Posterior vena cava (tissue), 2 donors: ENCODE measurements at regions of chr16 and their contacts with region 1.

Region 1: DNA sequence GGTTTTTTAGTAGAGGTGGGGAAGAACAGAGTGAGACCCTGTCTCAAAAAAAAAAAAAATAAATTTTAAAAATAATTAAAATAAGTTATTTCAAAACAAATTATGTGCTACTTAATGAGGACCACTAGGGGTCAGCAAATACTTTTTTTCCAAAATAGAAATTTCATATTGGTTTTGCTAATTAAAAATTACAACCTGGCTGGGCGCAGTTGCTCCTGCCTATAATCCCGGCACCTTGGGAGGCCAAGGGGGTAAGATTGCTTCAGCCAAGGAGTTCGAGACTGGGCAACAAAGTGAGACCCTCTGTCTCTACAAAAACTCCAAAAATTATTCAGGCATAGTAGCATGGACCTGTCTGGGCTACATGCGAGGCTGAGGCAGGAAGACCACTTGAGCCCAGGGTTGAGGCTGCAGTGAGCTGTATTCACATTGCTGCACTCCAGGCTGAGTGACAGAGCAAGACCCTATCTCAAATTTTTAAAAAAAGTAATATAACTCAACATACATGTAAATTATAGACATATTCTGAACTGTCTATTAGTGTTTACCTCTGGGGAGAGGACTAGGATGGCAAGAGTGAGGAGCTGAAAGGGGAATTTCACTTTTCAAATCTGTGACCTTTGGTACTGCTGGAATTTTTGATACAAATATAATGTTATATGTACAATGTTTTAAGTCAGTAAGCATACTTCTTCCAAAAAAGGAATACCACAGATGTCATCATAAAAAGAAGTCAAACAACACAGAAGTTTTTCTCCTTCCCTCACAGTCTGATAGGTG is 8.1 kb downstream of the MEIOB start:
- DNase-seq: no peak

Region 2: DNA sequence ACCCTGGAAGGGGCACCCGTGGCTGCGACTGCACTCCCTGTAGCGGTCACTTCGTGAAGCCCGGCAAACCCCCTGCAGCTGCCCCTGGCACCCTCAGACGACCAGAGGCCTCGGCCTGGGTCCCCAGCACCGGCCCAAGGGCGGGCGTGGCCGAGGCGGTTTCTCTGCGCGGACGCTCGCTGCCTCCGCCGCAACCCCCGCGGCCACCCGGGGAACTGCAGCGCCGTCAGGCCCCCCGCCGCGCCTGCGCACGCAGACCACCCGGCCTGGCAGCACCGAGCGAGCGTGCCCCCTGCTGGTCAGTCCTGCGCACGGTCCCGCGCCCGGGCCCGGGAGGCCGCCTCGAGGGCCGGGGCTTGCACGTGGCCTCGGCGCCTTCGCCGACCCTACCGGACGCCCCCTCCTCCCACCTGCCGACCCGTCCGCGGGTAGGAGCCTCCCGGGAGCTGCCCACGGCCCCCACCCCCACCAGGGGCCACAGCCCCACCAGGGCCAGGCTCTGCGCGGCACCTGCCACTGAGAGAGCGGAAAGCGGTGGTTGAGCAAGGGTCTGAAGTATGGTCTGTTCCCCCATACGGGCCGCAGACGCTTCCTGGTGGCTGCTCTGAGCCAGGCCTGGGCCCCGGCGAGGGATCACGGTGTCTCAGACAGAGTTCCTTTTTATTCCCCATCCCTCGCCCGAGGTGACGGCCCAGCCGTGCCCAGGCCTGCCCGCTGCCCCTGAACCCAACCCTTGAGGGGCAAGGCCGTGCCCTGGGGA is 65.9 kb after region 1 on chr16:
- intact Hi-C with region 1: loop called (anchors 2 to 5 kb)
- DNase-seq: peak; percentile 97